K562 (cell line): ENCODE measurements at regions of chr22 and their contacts with region 1.

Region 1: GRCh38 chr22:43036282-43036829 is 21.4 kb upstream of the PACSIN2 start:
- DNase-seq: no peak
- ATAC-seq: no peak
- H3K4me3 ChIP-seq: no peak overlapping the region
- H3K27ac ChIP-seq: no peak overlapping the region
- H3K4me1 ChIP-seq: peaks cover 0 to 10% of the 10 kb centered on the region in 2 experiments; a peak in 2 of 5 replicates
- H3K27me3 ChIP-seq: no peaks in the 10 kb centered on the region; a peak in 1 of 5 replicates
- CTCF ChIP-seq: no peak
- EP300 ChIP-seq: no peak
- POLR2A ChIP-seq: no peak
- RAD21 ChIP-seq: no peak

Region 2: DNA sequence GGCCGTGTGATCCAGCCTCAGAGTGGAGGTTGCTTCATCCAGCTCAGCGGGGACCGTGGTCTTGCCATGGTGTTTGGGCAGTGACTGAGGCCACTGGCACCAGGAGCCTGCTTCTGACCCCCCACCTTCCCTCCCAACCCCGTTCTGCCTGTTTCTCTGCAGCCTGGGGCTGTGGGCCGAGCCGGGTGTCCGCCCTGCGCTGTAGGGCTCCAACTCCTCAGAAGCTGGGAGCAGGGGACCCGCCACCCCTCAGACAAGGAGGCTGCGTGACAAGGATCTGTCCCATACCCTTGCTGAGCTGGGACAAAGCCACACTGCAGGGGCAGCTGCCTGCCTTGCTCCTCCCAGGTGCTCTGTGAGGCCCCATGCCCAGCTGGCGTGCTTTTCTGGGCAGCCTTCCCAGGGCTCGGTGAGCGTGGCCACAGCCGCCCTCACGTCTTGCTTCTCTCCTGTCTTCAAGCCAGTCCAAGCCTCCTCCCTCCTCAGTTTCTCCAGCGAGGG is 167.6 kb before region 1 on chr22:
- CTCF ChIA-PET with region 1: interaction called, 4 read pairs
- POLR2A ChIA-PET with region 1: no interaction called
- in situ Hi-C with region 1: no loop called
- intact Hi-C with region 1: loop called (anchors 2 kb)
- DNase-seq: no peak
- ATAC-seq: no peak
- H3K4me3 ChIP-seq: no peak overlapping the region
- H3K27ac ChIP-seq: no peak overlapping the region
- H3K4me1 ChIP-seq: peaks cover 0 to 4% of the 10 kb centered on the region in 2 experiments; a peak in 1 of 5 replicates
- H3K27me3 ChIP-seq: no peaks in the 10 kb centered on the region
- CTCF ChIP-seq: no peak
- EP300 ChIP-seq: no peak
- POLR2A ChIP-seq: no peak
- RAD21 ChIP-seq: no peak

Region 3: GRCh38 chr22:42967933-42968332 is 68.4 kb before region 1 on chr22:
- CTCF ChIA-PET with region 1: no interaction called
- POLR2A ChIA-PET with region 1: interaction called, 3 read pairs
- in situ Hi-C with region 1: loop called (anchors 5 kb)
- intact Hi-C with region 1: loop called (anchors 10 kb)
- DNase-seq: peak; percentile 48 to 62 (median 55)
- ATAC-seq: peak; percentile 96
- H3K4me3 ChIP-seq: no peak overlapping the region
- H3K27ac ChIP-seq: no peak overlapping the region
- H3K4me1 ChIP-seq: peaks cover 5 to 9% of the 10 kb centered on the region in 2 experiments
- H3K27me3 ChIP-seq: no peaks in the 10 kb centered on the region
- CTCF ChIP-seq: peak; percentile 49 to 56 (median 54); a peak in 5 of 6 replicates
- EP300 ChIP-seq: no peak
- POLR2A ChIP-seq: no peak
- RAD21 ChIP-seq: peak; percentile 30 to 75; a peak in 3 of 4 replicates

Region 4: GRCh38 chr22:42978453-42979103 is 57.8 kb before region 1 on chr22:
- CTCF ChIA-PET with region 1: no interaction called
- POLR2A ChIA-PET with region 1: no interaction called
- in situ Hi-C with region 1: no loop called
- intact Hi-C with region 1: loop called (anchors 10 kb)
- DNase-seq: no peak
- ATAC-seq: no peak
- H3K4me3 ChIP-seq: no peak overlapping the region
- H3K27ac ChIP-seq: no peak overlapping the region
- H3K4me1 ChIP-seq: peaks cover 4 to 12% of the 10 kb centered on the region in 2 experiments
- H3K27me3 ChIP-seq: no peaks in the 10 kb centered on the region
- CTCF ChIP-seq: no peak
- EP300 ChIP-seq: no peak
- POLR2A ChIP-seq: no peak
- RAD21 ChIP-seq: no peak